ENCODE measurements at regions of chr18 and their contacts with region 1.

Region 1: DNA sequence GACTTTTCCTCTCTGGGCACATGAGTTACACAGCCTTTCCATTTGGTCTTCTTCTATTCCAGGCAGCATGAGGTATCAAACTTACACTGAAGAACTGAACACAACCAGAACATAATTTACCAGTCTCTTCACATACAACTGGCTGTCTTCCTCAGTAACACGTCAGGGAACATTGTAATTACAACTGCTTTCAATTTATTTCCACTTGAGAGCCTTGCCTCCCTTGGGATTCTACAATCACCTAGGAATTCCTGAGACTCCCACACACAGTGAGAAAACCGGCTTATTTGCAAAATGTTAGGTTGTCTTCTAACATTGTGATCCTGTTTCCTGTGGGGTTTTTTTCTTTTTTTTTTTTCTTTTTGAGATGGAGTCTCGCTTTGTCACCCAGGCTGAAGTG is 149.9 kb downstream of the TMX3 start:
- DNase-seq: no peak
- ATAC-seq: no peak

Region 2: DNA sequence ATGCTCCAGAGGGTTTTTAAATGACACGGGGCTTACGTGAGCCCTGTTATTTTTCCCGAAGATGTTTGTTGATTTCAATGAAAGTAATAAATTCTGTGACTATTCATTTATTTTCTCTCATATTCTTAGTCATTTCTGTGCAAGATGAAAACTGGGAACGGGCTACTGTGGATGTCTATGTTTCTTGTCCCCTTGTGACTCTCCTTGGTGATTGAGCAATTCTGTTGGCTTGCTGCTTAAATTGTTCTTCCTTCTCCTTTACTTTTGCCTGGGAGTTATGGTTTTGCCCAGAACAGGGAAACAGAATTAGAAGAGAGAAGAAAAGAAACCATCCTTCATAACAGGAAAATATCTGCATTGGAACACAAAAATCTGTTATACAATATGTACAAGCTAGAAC is 540.2 kb before region 1 on chr18:
- intact Hi-C with region 1: no loop called
- DNase-seq: no peak
- ATAC-seq: peak; percentile 57

Region 3: GRCh38 chr18:68548904-68549871 is 15.8 kb before region 1 on chr18:
- intact Hi-C with region 1: loop called (anchors 2 kb)
- DNase-seq: no peak
- ATAC-seq: no peak

Measured in Right ventricle myocardium inferior (tissue), 1 donor.